Activated naive CD4-positive, alpha-beta T cell treated with anti-CD3 and anti-CD28 coated beads for 36 hours (primary cell): ENCODE measurements at regions of chr16 and their contacts with region 1.

Region 1: GRCh38 chr16:53346-54236 is at the starts of genes POLR3K and SNRNP25:
- DNase-seq: peak; percentile 99
- H3K4me3 Mint-ChIP-seq: peak within 1 kb of the TSS; percentile 94
- H3K27ac Mint-ChIP-seq: peak within 1 kb of the TSS; percentile 91
- H3K4me1 Mint-ChIP-seq: peaks cover 31% of the 10 kb centered on the region
- H3K27me3 Mint-ChIP-seq: no peaks in the 10 kb centered on the region
- total RNA-seq, gene POLR3K: 38.2 to 40.9 TPM
- total RNA-seq, gene SNRNP25: 38.0 to 38.6 TPM

Region 2: DNA sequence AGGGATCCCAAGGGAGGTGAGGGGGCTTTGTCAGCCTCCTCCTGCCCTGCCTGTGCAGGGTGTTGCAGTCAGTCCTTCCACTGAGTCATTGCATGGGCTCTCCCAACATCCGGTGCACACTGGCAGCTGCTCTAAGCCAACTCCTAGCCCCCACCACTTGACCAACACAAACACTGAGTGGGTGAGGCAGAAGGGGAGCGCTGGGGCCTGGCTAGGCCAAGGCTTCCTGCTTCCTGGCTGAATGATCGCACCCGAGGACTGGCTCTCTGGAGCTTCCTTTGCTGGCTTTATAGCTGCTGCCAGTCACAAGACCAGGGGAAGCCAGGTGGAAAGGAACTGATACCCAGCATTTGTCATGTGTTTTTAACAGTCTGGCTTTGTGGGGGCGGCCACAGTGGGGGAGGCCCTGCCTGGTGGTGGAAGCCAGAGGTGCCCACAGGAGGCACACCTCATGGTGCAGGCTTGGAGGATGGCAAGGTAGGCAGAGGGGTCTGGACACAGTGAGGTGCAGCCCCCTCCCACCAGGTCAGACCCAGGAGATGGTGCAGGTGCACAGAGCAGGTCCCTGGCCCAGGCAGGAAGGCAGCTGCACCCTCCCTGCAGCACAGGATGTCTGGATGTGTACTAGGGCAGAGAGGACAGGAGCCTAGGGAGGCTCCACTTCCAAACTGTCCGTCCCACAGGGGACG is 31.3 kb after region 1 on chr16:
- CTCF ChIA-PET with region 1: no interaction called
- intact Hi-C with region 1: loop called (anchors 1 kb)
- DNase-seq: peak; percentile 84
- H3K4me3 Mint-ChIP-seq: peak overlapping the region; percentile 21
- H3K27ac Mint-ChIP-seq: peak overlapping the region; percentile 79
- H3K4me1 Mint-ChIP-seq: peaks cover 28% of the 10 kb centered on the region
- H3K27me3 Mint-ChIP-seq: no peaks in the 10 kb centered on the region

Region 3: DNA sequence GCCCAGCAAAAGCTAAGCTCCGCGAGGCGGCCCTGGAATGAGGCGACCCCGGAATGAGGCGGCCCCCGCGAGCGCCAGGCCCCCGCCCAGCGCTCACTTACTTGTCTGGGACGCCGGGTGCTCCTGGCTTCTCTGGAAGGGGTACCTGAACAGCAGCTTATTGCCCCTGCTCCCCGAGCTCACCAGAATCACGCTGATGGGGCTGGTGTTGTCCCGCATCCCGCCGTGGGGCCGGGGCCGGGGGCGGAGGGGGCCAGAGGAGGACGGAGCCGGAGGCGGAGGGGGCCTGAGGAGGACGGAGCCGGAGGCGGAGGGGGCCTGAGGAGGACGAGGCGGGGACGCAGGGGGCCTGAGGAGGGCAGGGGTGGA is 84.4 kb after region 1 on chr16:
- CTCF ChIA-PET with region 1: no interaction called
- intact Hi-C with region 1: loop called (anchors 1 kb)
- DNase-seq: peak; percentile 22
- H3K4me3 Mint-ChIP-seq: peak overlapping the region; percentile 81
- H3K27ac Mint-ChIP-seq: no peak overlapping the region
- H3K4me1 Mint-ChIP-seq: peaks cover 27% of the 10 kb centered on the region
- H3K27me3 Mint-ChIP-seq: no peaks in the 10 kb centered on the region